Heart right ventricle (tissue), 16 donors: ENCODE measurements at regions of chr10 and their contacts with region 1.

Region 1: DNA sequence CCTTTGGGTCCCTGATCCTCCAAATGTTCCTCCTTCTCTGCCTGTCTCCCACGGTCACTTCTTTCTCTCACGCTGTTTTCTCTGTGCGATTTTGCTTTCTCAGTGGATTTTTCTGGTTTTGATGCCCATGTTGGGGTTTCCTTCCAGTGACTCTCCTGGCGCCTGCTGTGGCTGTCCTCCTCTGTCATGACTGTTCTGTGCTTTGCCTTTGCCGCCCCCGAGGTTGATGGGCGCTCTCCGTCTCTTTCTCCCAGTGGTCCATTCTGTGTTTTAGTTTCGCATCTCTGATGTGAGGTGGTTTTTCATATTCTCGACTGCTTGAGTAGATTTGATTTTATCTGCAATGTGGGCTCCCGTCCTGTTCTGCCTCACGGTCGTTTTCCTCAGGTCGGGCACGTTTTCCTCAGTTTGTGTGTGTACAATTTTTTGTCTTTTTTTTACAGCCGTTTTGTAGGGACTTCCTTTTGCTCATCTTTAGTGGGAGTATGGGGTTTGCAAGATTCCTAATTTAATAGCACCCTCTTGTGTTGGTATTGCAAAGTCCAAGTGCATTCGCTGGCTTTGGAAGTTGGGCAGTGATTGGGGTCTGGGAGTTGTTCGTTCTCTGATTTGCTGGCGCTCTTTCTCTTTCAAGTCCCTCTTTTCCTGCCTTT is 100.0 kb downstream of the INPP5A start:
- DNase-seq: no peak
- ATAC-seq: peak in 7 of 8 donors; percentile 64 to 85 (median 76)
- H3K4me3 ChIP-seq: no peak overlapping the region
- H3K27ac ChIP-seq: no peak overlapping the region
- H3K4me1 ChIP-seq: peaks cover 20 to 72% (median 36%) of the 10 kb centered on the region in 9 donors
- H3K27me3 ChIP-seq: no peaks in the 10 kb centered on the region
- CTCF ChIP-seq: peak; percentile 66 to 85 (median 76)

Region 2: GRCh38 chr10:132387764-132388210 is 249.8 kb before region 1 on chr10:
- intact Hi-C with region 1: loop called in 6 of 10 experiments (anchors 5 to 10 kb)
- DNase-seq: peak; percentile 68 to 80
- ATAC-seq: peak; percentile 58 to 81 (median 75)
- H3K4me3 ChIP-seq: no peak overlapping the region
- H3K27ac ChIP-seq: peak overlapping the region in 3 of 10 donors; percentile 11 to 52 (median 37)
- H3K4me1 ChIP-seq: peaks cover 3 to 25% (median 12%) of the 10 kb centered on the region in 9 donors
- H3K27me3 ChIP-seq: no peaks in the 10 kb centered on the region
- CTCF ChIP-seq: peak; percentile 27 to 72 (median 62)

Region 3: DNA sequence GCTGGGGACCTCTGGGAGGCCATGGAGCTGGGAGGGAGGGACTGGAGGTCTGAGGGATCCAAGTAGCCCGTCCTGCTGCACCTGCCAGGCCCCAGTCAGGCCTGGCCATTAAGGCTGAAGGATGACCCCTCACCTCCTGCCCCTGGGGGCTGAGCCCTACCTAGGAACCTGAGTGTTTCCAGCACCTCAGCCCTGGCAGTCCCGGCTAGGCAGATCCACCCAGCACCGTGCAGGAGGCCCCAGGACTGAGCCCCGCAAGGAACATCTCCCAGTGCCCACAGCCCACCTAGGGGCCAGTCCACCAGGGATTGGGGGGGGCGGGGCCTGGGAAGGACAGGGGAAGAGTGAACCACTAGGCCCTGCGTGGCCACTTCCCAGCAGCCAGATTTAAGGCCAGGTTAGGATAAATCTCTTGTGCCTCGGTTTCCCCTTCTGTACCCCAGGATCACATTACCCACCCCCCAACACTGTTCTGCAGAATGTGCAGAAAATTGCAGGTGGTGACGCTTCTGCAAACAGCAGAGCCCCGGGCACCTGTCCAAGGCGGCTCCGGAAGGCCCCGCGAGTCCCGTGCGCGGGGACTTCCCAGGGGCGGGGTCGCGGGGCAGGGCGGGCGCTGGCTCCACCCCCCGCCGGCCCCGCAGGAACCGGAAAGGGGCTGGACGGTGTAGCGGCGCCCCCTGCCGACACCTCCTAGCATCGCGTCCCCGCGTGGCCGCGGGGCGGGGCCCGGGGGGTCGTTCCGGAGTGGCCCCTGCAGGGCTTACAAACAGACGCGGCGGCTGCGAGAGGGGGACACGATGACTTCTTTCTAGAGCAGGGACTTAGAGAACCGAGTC is 184.8 kb before region 1 on chr10:
- intact Hi-C with region 1: loop called in 7 of 10 experiments (anchors 1 to 5 kb)
- DNase-seq: peak; percentile 79 to 88
- ATAC-seq: peak; percentile 76 to 90 (median 85)
- H3K4me3 ChIP-seq: peak overlapping the region in 8 of 10 donors; percentile 10 to 37 (median 22)
- H3K27ac ChIP-seq: peak overlapping the region in 2 of 10 donors; percentile 15 to 48
- H3K4me1 ChIP-seq: peaks cover 7 to 22% (median 18%) of the 10 kb centered on the region in 9 donors
- H3K27me3 ChIP-seq: peaks cover 0 to 8% (median 3%) of the 10 kb centered on the region in 7 donors
- CTCF ChIP-seq: peak; percentile 90 to 98 (median 97)

Region 4: GRCh38 chr10:132464253-132465192 is 173.1 kb before region 1 on chr10:
- intact Hi-C with region 1: loop called in 7 of 10 experiments (anchors 1 to 5 kb)
- DNase-seq: peak; percentile 82 to 89
- ATAC-seq: peak; percentile 77 to 87 (median 84)
- H3K4me3 ChIP-seq: peak overlapping the region in 1 of 10 donors; percentile 15
- H3K27ac ChIP-seq: peak overlapping the region; percentile 84 to 99 (median 94)
- H3K4me1 ChIP-seq: peaks cover 25 to 81% (median 68%) of the 10 kb centered on the region in 9 donors
- H3K27me3 ChIP-seq: no peaks in the 10 kb centered on the region
- CTCF ChIP-seq: no peak

Region 5: DNA sequence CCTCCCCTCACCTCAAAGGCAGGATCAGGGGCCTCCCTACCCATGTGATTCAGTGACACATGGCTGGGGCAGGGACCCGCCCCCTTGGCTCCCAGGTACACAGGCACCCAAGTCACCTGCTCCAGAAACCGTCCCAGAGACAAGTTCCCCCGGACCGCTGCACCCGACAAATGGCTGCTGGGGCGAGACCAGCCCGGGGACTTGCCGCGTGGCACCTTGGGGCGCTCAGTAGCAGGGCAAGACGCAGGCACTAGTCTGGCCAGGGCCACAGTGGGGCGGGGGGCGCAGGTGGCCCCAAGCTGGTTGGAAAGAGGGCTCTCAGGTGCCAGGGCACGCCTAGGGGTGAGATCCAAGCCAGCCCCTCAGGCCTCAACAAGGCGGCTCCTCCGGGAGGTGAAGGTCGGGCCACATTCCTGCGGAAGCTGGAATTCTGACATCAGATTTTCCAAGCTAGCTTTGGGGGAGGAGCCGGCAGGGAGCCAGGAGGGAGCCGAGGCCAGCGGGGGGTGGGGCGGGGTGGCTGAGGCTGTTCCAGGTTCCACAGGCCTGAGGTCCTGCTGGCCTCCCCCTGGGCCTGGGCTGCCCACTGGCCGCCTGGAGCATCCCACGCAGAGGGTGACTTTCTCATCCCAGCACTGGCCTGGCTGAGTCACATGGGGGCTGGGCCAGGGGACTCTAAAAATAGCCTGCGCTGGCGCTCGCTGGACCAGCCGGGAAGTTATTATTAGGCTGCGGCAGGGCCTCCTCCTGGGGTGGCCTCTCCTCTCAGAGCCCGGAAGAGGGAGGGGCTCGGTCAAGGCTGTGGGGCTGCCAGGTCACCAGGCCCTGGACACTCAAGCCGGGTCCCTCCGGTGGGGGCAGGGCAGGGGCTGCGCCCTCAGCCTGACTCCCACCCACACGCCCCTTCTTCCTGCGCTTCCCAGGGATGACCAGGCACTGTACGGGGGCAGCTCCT is 120.6 kb before region 1 on chr10:
- intact Hi-C with region 1: loop called in 6 of 10 experiments (anchors 5 kb)
- DNase-seq: peak; percentile 93 to 95
- ATAC-seq: peak; percentile 84 to 93 (median 88)
- H3K4me3 ChIP-seq: peak overlapping the region; percentile 26 to 55 (median 41)
- H3K27ac ChIP-seq: peak overlapping the region; percentile 76 to 98 (median 96)
- H3K4me1 ChIP-seq: peaks cover 46 to 76% (median 68%) of the 10 kb centered on the region in 9 donors
- H3K27me3 ChIP-seq: no peaks in the 10 kb centered on the region
- CTCF ChIP-seq: no peak

Region 6: DNA sequence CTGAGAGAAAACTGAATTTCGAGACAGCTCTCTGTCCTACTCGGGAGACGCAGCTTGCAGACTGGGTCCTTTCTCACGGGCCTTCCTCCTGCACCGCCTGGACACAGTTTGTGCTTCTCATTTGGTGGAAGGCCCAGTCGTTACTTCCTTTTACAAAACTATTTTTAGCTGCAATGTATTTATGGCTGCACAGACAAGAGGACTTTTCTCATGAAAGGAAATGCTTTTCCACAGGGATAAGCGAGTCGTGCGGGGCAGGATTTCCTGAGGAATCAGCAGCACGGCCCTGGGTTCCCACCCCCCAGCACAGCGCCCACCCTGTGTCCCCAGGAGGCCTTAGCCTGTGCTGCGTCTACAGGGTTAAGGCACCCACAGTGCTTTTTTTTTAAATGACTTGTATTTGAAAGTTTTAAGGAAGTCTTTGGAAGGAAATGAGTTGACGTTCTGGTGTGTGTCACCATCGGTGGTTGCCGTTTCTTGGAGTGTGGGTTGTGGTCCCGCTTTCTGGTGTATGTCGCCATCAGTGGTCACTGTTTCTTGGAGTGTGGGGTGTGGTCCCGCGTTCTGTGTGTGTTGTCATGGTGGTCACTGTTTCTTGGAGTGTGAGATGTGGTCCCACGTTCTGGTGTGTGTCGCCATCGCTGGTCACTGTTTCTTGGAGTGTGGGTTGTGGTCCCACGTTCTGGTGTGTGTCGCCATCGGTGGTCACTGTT is 49.1 kb before region 1 on chr10:
- intact Hi-C with region 1: loop called in 3 of 10 experiments (anchors 5 kb)
- DNase-seq: peak; percentile 61 to 84
- ATAC-seq: peak; percentile 47 to 83 (median 75)
- H3K4me3 ChIP-seq: peak overlapping the region in 8 of 10 donors; percentile 17 to 29 (median 24)
- H3K27ac ChIP-seq: peak overlapping the region; percentile 64 to 91 (median 80)
- H3K4me1 ChIP-seq: peaks cover 56 to 100% (median 94%) of the 10 kb centered on the region in 9 donors
- H3K27me3 ChIP-seq: no peaks in the 10 kb centered on the region
- CTCF ChIP-seq: no peak

Region 7: DNA sequence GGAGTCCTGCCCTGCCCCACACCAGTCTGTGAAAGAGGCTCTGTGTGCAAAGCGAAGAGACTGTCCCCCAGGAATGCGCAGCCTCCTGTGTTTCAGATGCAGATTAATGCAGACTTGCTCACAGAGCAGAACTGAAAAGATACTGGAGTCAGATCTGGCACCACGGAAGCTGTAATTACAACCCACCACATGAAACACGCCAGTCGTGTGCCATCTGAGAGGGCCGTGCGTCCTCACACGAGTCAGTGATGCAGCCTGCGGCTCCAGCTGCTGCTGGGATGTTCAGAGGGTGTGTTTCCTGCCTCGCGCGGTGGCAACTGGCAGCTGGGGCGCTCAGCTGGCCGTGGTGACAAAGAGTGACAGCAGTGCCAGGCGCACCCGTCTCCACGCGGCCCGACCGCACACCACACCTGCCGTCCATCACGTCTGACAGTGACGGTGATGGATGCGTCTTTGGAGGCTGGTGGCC is 98.4 kb after region 1 on chr10:
- intact Hi-C with region 1: no loop called
- DNase-seq: no peak
- ATAC-seq: no peak
- H3K4me3 ChIP-seq: no peak overlapping the region
- H3K27ac ChIP-seq: no peak overlapping the region
- H3K4me1 ChIP-seq: peaks cover 0 to 23% (median 11%) of the 10 kb centered on the region in 9 donors
- H3K27me3 ChIP-seq: no peaks in the 10 kb centered on the region
- CTCF ChIP-seq: no peak